AG04450 (cell line): ENCODE measurements at regions of chr4 and their contacts with region 1.

Region 1: GRCh38 chr4:168995537-168996295 is 14.3 kb downstream of the CBR4 start:
- DNase-seq: no peak
- H3K4me3 ChIP-seq: no peak overlapping the region
- H3K27ac ChIP-seq: no peak overlapping the region
- H3K27me3 ChIP-seq: no peaks in the 10 kb centered on the region
- CTCF ChIP-seq: peak; percentile 54

Region 2: GRCh38 chr4:168981460-168981859 is 14.3 kb before region 1 on chr4:
- CTCF ChIA-PET with region 1: interaction called, 13 read pairs
- POLR2A ChIA-PET with region 1: interaction called, 3 read pairs
- DNase-seq: no peak
- H3K4me3 ChIP-seq: no peak overlapping the region
- H3K27ac ChIP-seq: no peak overlapping the region
- H3K27me3 ChIP-seq: no peaks in the 10 kb centered on the region
- CTCF ChIP-seq: no peak

Region 3: GRCh38 chr4:169010125-169011023 is 14.7 kb after region 1 on chr4 and contains the start of gene CBR4:
- CTCF ChIA-PET with region 1: interaction called, 34 read pairs
- POLR2A ChIA-PET with region 1: interaction called, 6 read pairs
- DNase-seq: peak; percentile 96
- H3K4me3 ChIP-seq: peak within 1 kb of the TSS; percentile 83
- H3K27ac ChIP-seq: peak within 1 kb of the TSS; percentile 92
- H3K27me3 ChIP-seq: no peaks in the 10 kb centered on the region
- CTCF ChIP-seq: peak; percentile 43
- polyA plus RNA-seq, gene CBR4: 4.2 and 4.5 TPM in 2 replicates

Region 4: DNA sequence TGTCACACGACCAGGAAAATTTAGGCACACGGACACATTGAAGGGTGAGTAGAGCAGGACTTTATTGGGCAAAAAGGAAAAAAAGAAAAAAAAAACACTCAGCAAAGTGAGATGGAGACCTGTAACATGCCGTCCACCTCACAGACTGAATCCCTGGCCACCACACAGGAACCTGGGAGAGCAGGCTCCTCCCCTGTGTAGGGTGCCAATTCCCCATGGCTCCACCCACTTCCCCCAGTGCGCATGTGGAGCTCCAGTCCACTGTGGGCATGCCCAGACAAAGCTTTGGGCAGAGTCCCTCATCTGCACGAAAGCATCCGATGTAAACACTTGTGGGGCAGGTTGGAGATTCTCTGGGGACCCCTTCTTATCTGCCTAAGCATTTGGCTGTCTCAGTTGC is 37.9 kb after region 1 on chr4:
- CTCF ChIA-PET with region 1: no interaction called
- POLR2A ChIA-PET with region 1: no interaction called
- DNase-seq: no peak
- H3K4me3 ChIP-seq: no peak overlapping the region
- H3K27ac ChIP-seq: no peak overlapping the region
- H3K27me3 ChIP-seq: no peaks in the 10 kb centered on the region
- CTCF ChIP-seq: no peak

Region 5: GRCh38 chr4:169064296-169064695 is 68.6 kb after region 1 on chr4:
- CTCF ChIA-PET with region 1: interaction called, 10 read pairs
- POLR2A ChIA-PET with region 1: no interaction called
- DNase-seq: no peak
- H3K4me3 ChIP-seq: no peak overlapping the region
- H3K27ac ChIP-seq: no peak overlapping the region
- H3K27me3 ChIP-seq: no peaks in the 10 kb centered on the region
- CTCF ChIP-seq: no peak

Region 6: GRCh38 chr4:169485791-169486742 is 490.4 kb after region 1 on chr4:
- CTCF ChIA-PET with region 1: interaction called, 41 read pairs
- POLR2A ChIA-PET with region 1: no interaction called
- DNase-seq: no peak
- H3K4me3 ChIP-seq: no peak overlapping the region
- H3K27ac ChIP-seq: no peak overlapping the region
- H3K27me3 ChIP-seq: no peaks in the 10 kb centered on the region
- CTCF ChIP-seq: peak; percentile 57

Region 7: GRCh38 chr4:169492438-169493163 is 496.9 kb after region 1 on chr4:
- CTCF ChIA-PET with region 1: interaction called, 25 read pairs
- POLR2A ChIA-PET with region 1: no interaction called
- DNase-seq: no peak
- H3K4me3 ChIP-seq: no peak overlapping the region
- H3K27ac ChIP-seq: peak overlapping the region; percentile 11
- H3K27me3 ChIP-seq: no peaks in the 10 kb centered on the region
- CTCF ChIP-seq: peak; percentile 87

Region 8: DNA sequence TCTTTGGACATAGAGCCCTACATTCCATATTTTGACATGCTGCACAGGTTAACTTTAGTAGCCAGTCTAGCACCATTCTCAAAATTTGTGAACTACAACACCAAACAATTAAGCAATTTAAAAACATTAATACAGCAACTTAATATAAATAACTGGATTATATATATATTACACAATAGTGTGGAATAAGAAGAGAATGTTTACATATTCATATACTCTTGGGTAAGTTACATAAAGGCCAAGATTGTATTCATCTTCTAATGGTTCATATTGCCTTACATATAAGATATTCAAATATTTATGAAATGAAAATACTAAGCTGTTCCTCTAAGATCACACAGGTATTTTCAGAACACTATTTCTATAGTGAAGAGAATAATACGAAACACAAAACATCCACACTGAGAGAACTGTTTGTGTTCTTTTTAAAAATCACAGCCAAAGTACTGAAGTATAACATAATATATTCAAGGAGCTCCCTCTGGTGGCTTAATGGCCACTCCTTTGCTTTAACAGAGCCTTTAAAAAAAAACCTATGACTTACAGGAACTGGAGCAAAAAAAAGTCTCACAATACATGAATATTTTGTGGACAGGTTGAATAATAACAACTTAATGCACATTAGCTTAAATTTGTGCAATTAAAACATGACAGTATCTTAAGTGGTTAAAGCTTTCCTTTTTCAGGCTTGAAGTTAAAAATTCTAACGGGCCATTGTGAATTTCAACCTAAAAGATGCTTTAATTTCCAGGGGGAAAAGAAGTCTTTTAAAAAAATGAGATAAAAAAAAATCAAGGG is 570.5 kb after region 1 on chr4:
- CTCF ChIA-PET with region 1: interaction called, 33 read pairs
- POLR2A ChIA-PET with region 1: no interaction called
- DNase-seq: peak; percentile 18
- H3K4me3 ChIP-seq: no peak overlapping the region
- H3K27ac ChIP-seq: no peak overlapping the region
- H3K27me3 ChIP-seq: no peaks in the 10 kb centered on the region
- CTCF ChIP-seq: peak; percentile 75